Panc1 (cell line): ENCODE measurements at regions of chr12 and their contacts with region 1.

Region 1: DNA sequence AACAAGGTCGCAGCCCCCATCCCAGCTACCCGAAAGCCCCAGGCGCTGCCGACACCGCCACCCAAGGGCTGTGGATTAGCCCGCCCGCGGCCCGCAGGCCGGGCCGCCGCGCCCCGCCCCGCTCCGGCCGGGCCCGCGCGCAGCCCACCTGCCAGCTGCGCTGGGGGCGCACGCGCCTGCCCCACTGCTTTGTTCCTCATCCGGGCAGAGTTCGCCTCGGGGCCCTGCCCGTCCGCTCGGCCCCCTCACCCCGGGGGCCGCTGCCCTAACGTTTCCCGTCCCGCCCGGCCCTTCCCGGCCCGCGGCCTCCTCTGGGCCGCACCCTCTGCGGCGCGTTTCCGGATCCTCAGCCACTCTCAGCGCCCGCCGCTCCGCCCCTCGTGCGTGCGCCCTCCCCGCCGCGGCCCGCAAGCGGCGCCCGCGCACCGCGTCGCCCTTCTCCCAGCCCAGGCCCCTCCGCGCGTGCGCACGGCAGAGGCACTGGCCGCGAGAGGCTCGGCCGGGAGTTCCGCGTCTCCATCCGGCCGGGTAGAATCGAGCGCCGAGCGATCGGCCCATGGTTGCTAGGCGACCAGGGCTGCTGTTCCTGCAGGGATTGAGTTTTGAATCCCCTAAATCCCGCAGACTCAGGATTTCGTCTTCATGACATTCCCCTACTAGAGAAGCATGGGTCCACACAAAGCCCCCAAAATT is at the start of gene PRDM4:
- DNase-seq: peak; percentile 52
- ATAC-seq: peak; percentile 100
- H3K4me3 ChIP-seq: peak within 1 kb of the TSS; percentile 98
- H3K27ac ChIP-seq: peak within 1 kb of the TSS; percentile 93
- H3K4me1 ChIP-seq: peaks cover 14% of the 10 kb centered on the region
- H3K27me3 ChIP-seq: no peaks in the 10 kb centered on the region
- CTCF ChIP-seq: peak; percentile 77
- total RNA-seq, gene PRDM4: 28.9 TPM

Region 2: DNA sequence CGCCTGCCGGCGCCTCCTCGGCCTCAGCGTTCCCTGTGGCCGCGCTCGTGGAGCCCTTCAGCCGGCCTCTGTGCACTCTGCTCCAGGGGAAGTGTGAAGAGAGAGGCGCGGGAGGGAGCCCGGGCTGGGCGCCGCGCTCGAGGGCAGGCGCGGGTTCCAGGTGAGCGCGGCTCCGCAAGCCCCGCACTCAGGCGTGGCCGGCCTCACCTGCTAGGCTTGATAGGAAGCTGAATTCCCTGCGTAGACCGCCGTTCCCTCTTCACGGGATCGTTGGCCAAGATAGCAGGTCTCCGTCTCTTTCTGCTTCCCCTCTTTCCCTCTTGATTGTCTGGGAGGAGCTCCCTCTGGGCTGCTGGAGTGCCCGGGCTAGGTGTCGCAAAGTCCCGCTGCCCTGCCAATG is 103.3 kb after region 1 on chr12:
- CTCF ChIA-PET with region 1: no interaction called
- POLR2A ChIA-PET with region 1: no interaction called
- in situ Hi-C with region 1: loop called (anchors 25 kb)
- intact Hi-C with region 1: no loop called
- DNase-seq: no peak
- ATAC-seq: no peak
- H3K4me3 ChIP-seq: no peak overlapping the region
- H3K27ac ChIP-seq: no peak overlapping the region
- H3K4me1 ChIP-seq: no peaks in the 10 kb centered on the region
- H3K27me3 ChIP-seq: peaks cover 6% of the 10 kb centered on the region; the same call in 1 of the 2 replicates
- CTCF ChIP-seq: no peak